ENCODE measurements at regions of chr1 and their contacts with region 1.

Region 1: DNA sequence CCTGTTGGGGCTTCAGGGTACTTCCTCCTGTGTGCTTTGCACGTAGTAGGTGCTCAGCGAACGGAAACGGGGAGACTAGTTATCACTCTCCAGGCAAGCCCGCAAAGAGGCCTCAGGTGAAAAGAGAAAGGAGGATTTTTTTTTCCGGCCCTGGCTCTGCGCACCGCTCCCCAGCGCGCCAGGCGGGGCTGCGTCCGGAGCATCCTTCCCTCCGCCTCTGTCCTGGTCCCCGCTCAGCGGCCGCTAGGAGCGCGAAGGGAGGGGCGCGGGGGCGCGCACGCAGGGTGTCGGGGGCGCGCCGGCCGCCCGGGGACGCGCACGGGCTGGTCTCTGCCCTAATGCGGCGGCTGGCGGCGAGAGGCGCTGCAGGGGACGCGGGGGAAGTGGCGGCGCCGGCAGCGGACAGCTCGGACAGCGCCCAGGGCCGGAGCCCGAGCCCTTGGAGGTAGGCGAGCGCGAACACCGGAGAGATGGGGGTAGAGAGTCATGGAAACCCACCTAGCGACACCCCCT is 42.3 kb upstream of the NFASC start:
- DNase-seq: peak; percentile 74
- ATAC-seq: peak; percentile 94

Region 2: GRCh38 chr1:204842892-204843291 is 14.5 kb after region 1 on chr1:
- intact Hi-C with region 1: no loop called
- DNase-seq: peak; percentile 37
- ATAC-seq: peak; percentile 65

Region 3: DNA sequence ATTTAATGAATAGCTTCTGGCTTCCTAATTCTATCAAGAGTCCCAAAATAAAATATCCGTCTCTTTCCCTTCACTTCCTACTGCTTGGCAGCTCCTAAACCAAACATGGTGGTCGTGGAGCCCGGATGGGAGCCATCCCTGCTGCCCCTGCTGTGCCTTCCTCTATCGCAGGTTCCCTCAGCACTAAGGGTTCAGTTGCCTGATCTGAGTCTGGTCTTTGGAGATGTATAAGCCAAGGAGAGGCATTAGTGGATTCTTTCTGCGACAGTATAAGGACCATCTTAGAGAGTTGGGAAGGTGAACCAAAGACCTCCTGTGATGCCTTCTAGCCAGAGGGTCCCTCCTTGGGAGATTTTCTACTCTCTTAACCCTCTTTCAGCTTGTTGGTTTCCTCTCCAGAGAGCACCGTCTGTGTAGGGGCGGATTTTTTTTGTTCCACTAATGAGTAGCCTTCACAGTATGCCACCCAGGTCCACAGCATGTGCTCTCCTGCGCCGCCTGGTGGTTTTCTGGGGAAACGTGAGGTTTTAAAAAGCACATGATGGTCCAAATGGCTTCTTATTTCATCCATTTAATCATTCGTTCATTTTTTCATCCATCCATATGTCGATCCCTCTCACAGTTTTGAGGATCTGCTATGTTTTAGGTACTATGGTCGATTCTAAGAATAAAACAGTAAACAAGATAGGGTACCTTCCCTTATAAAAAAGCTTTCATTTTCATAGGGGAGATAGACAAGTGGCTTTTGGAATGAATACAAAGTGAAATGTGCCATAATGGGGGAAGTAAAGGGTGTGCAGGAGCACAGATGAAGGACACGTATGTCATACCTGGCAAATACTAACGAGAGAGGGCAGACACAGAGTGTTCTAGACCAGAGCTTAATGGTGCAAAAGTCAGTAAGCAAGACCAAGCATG is 113.3 kb after region 1 on chr1:
- intact Hi-C with region 1: loop called (anchors 10 kb)
- DNase-seq: peak; percentile 84
- ATAC-seq: peak; percentile 83